Activated naive CD4-positive, alpha-beta T cell treated with anti-CD3 and anti-CD28 coated beads for 36 hours (primary cell): ENCODE measurements at regions of chr9 and their contacts with region 1.

Region 1: GRCh38 chr9:19875291-19875920 is 86.6 kb upstream of the SLC24A2 start:
- DNase-seq: no peak
- H3K4me3 Mint-ChIP-seq: no peak overlapping the region
- H3K27ac Mint-ChIP-seq: no peak overlapping the region
- H3K4me1 Mint-ChIP-seq: no peaks in the 10 kb centered on the region
- H3K27me3 Mint-ChIP-seq: peaks cover 18% of the 10 kb centered on the region

Region 2: GRCh38 chr9:19830796-19831195 is 44.6 kb before region 1 on chr9:
- CTCF ChIA-PET with region 1: no interaction called
- intact Hi-C with region 1: loop called (anchors 5 kb)
- DNase-seq: no peak
- H3K4me3 Mint-ChIP-seq: no peak overlapping the region
- H3K27ac Mint-ChIP-seq: no peak overlapping the region
- H3K4me1 Mint-ChIP-seq: no peaks in the 10 kb centered on the region
- H3K27me3 Mint-ChIP-seq: peaks cover 8% of the 10 kb centered on the region

Region 3: GRCh38 chr9:20220286-20220685 is 344.9 kb after region 1 on chr9:
- CTCF ChIA-PET with region 1: no interaction called
- intact Hi-C with region 1: no loop called
- DNase-seq: no peak
- H3K4me3 Mint-ChIP-seq: no peak overlapping the region
- H3K27ac Mint-ChIP-seq: no peak overlapping the region
- H3K4me1 Mint-ChIP-seq: peaks cover 18% of the 10 kb centered on the region
- H3K27me3 Mint-ChIP-seq: no peaks in the 10 kb centered on the region